ENCODE measurements at regions of chr5 and their contacts with region 1.

Region 1: DNA sequence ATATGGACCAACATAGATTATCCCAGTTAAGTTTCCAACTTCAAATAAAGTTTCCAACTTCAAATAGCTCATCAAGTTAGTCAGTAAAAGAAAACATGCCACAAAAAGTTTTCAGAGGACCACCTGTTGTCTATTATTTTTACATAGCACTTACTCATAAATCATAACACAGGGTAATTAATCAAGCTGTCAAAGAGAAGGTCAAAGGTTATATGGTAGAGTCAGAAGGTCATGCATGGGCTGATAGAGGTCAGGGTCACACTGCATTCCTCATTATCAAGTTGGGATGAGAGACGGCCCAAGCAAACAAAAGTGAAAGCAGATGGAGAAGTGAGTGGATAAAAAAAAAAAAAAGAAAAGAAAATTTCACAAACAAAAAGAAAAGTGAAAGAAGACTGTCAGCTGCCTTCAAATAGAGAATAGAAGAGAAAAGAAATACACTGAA is 145.5 kb upstream of the POU5F2 start:
- DNase-seq: no peak
- ATAC-seq: no peak; the same call in 1 of the 3 replicates
- H3K4me3 ChIP-seq: no peak overlapping the region
- H3K27ac ChIP-seq: no peak overlapping the region
- H3K4me1 ChIP-seq: no peaks in the 10 kb centered on the region
- H3K27me3 ChIP-seq: no peaks in the 10 kb centered on the region
- CTCF ChIP-seq: no peak
- EP300 ChIP-seq: no peak
- POLR2A ChIP-seq: no peak
- RAD21 ChIP-seq: no peak

Region 2: GRCh38 chr5:93874080-93874479 is 12.9 kb before region 1 on chr5:
- CTCF ChIA-PET with region 1: interaction called, 5 read pairs
- POLR2A ChIA-PET with region 1: no interaction called
- RAD21 ChIA-PET with region 1: no interaction called
- SMC1A ChIA-PET with region 1: interaction called, 11 read pairs
- in situ Hi-C with region 1: no loop called
- intact Hi-C with region 1: no loop called
- DNase-seq: no peak
- ATAC-seq: peak; percentile 70
- H3K4me3 ChIP-seq: no peak overlapping the region
- H3K27ac ChIP-seq: no peak overlapping the region
- H3K4me1 ChIP-seq: no peaks in the 10 kb centered on the region; the same call in 1 of the 2 replicates
- H3K27me3 ChIP-seq: no peaks in the 10 kb centered on the region
- CTCF ChIP-seq: no peak
- EP300 ChIP-seq: no peak
- POLR2A ChIP-seq: no peak
- RAD21 ChIP-seq: no peak

Measured in GM12878 (cell line).